ENCODE measurements at regions of chr11 and their contacts with region 1.

Region 1: DNA sequence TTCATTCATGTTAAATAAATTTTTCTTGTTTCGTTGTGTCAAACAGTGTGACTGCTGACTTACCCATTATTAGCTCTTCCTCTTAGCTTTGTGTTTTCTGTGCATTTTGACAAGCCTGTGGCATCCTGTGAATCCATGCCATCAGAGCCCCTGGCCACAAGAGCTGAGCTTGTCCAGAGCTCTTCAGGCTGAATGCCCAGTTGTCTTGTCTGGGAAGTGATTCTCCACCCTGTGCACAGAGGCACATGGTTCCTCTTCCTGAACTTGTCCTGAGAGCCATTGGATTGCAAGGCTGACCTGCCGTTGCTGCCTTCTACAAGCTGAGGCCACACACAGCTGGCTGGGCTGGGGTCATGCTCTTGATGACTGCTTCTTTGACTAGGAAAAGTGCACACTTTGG is 64.1 kb downstream of the PPP6R3 start:
- DNase-seq: no peak
- H3K4me3 ChIP-seq: no peak overlapping the region
- H3K27ac ChIP-seq: peak overlapping the region in 1 of 5 donors; percentile 13
- H3K4me1 ChIP-seq: peaks cover 17 to 49% of the 10 kb centered on the region in 2 donors
- H3K27me3 ChIP-seq: no peaks in the 10 kb centered on the region
- CTCF ChIP-seq: no peak
- POLR2A ChIP-seq: no peak

Region 2: DNA sequence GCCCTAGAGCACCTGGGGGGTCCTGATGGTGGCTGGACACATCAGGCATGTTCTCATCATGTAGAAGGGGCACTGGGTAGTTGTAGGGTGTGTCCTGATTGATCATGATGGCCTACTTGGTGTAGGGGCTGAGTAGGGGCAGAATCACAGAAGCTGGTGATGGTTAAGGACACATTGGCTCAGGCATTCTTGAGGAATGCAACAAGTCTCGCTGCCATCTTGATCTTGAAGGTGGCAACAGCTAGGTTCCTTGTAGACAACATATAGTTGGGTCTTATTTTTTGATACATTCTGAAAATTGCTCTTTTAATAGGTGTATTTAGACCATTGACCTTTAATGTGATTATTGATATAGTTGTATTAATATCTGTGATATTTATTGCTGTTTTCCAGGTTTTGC is 36.1 kb before region 1 on chr11:
- intact Hi-C with region 1: loop called in 1 of 2 experiments (anchors 5 kb)
- DNase-seq: no peak
- H3K4me3 ChIP-seq: no peak overlapping the region
- H3K27ac ChIP-seq: no peak overlapping the region
- H3K4me1 ChIP-seq: peaks cover 13 to 17% of the 10 kb centered on the region in 2 donors
- H3K27me3 ChIP-seq: no peaks in the 10 kb centered on the region
- CTCF ChIP-seq: no peak
- POLR2A ChIP-seq: no peak

Region 3: DNA sequence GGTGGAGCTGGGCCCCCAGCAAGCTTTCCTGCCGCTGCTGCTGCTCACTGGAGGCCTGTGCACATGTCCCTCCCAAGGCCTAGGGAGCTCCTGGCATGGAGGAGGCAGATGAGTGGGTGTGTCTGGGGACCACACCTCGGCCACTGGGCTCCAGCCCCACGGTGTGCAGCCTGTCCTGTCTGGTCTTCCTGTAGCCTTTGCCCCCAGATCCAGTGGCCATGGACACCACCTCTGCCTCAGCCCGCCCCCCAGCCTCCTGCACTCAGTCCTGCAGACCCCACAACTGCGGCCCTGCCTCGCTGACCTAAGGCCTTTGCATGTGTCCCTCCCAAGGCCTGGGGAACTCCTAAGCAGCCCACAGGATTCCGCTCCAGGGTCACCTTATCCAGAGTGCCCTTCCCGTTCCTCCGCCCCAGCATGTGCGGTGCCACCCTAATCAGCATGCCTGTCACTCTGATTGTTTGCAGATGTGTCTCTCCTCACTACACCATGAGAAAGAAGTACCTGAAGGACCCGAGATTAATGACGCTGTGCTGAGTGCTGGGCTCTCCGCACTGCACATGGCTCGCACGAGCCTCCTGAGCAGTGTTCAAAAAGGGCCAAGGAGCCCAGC is 168.3 kb after region 1 on chr11:
- intact Hi-C with region 1: no loop called
- DNase-seq: no peak
- H3K4me3 ChIP-seq: no peak overlapping the region
- H3K27ac ChIP-seq: no peak overlapping the region
- H3K4me1 ChIP-seq: no peaks in the 10 kb centered on the region
- H3K27me3 ChIP-seq: no peaks in the 10 kb centered on the region
- CTCF ChIP-seq: no peak
- POLR2A ChIP-seq: no peak

Measured in adrenal gland (tissue), 19 donors.